ENCODE measurements at regions of chr16 and their contacts with region 1.

Region 1: GRCh38 chr16:66406534-66407221 is 20.4 kb upstream of the BEAN1 start:
- DNase-seq: peak; percentile 96
- H3K4me3 Mint-ChIP-seq: peak overlapping the region; percentile 87
- H3K27ac Mint-ChIP-seq: peak overlapping the region; percentile 63
- H3K4me1 Mint-ChIP-seq: peaks cover 19% of the 10 kb centered on the region
- H3K27me3 Mint-ChIP-seq: peaks cover 19% of the 10 kb centered on the region

Region 2: DNA sequence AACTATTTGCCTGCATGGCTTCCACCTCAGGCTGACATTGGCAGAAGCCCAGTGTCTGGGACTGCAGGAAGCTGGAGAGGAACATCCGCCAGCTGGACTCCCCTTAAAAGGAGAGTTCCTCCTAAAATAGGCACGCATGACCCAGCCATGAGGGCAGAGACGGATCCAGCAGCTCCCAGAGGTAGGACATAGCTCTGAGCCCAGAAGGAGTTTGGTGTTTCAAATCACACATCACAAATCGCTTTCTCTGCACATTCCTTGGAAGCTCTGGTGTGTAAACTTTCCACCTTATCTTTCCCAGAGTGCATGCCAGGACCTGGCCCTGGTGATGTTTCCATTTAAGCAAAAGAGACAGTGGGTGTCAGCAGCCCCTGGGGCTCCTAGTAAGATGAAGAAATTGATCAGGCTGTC is 271.3 kb before region 1 on chr16:
- intact Hi-C with region 1: no loop called
- DNase-seq: no peak
- H3K4me3 Mint-ChIP-seq: no peak overlapping the region
- H3K27ac Mint-ChIP-seq: no peak overlapping the region
- H3K4me1 Mint-ChIP-seq: no peaks in the 10 kb centered on the region
- H3K27me3 Mint-ChIP-seq: peaks cover 2% of the 10 kb centered on the region

Region 3: DNA sequence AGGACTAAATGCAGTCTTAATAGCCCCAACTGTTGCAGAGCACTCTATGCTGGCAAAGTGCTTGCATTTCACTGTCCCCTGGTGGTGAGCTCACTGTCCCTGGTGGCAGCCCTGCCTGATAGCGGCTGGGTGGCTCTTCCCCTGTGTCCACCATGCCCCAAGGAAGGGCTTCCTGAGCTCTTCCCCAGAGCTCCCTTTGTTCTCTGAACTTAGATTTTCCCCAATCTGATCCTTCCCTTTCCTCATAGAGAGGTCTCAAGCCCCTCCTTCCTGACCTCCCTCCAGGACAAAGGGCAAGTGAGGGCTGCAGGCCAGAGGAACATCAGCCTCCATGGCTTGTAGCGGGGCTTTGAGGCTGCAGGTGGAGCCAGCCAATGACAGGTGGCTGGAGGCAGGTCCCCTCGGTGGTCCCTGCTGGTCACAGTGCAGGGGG is 37.4 kb after region 1 on chr16:
- intact Hi-C with region 1: no loop called
- DNase-seq: no peak
- H3K4me3 Mint-ChIP-seq: no peak overlapping the region
- H3K27ac Mint-ChIP-seq: no peak overlapping the region
- H3K4me1 Mint-ChIP-seq: no peaks in the 10 kb centered on the region
- H3K27me3 Mint-ChIP-seq: peaks cover 33% of the 10 kb centered on the region

Region 4: DNA sequence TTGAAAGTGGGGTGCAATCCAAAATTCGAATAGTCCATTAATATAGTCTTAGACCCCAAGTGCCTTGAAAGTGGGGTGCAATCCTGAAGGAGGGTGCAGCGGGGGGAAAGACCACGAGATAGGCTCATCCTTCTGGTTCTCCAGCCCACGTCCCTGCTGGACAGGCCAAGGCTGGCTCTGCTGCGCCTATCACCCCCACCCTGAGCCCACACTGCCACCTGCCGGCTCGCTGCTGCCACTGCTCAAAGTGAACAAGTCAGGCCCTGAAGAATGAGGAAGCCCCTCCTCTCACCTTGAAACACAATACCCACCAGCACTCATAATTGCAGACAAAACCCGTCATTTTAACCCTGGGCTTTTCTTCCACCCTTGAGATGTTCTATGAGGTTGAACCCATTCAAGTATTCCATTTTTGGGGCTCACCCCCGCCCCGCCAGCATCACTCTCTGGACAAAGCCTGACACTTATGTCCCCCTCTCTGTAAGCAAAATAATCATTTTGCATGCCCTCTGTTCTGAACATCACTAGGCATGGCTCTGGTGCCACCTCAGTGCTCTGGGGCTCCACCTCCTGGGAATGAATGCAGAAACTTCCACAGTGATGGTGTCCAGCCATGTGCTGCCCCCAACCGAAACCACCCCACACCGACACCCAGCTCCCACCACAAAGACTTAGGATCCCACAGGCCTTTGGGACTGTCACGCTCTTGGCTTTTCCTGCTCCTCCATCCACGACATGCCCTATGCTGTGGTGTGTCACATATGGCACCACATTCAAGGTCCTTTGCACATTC is 77.2 kb after region 1 on chr16:
- intact Hi-C with region 1: loop called (anchors 1 kb)
- DNase-seq: peak; percentile 93
- H3K4me3 Mint-ChIP-seq: peak overlapping the region; percentile 33
- H3K27ac Mint-ChIP-seq: peak overlapping the region; percentile 31
- H3K4me1 Mint-ChIP-seq: peaks cover 23% of the 10 kb centered on the region
- H3K27me3 Mint-ChIP-seq: no peaks in the 10 kb centered on the region

Region 5: DNA sequence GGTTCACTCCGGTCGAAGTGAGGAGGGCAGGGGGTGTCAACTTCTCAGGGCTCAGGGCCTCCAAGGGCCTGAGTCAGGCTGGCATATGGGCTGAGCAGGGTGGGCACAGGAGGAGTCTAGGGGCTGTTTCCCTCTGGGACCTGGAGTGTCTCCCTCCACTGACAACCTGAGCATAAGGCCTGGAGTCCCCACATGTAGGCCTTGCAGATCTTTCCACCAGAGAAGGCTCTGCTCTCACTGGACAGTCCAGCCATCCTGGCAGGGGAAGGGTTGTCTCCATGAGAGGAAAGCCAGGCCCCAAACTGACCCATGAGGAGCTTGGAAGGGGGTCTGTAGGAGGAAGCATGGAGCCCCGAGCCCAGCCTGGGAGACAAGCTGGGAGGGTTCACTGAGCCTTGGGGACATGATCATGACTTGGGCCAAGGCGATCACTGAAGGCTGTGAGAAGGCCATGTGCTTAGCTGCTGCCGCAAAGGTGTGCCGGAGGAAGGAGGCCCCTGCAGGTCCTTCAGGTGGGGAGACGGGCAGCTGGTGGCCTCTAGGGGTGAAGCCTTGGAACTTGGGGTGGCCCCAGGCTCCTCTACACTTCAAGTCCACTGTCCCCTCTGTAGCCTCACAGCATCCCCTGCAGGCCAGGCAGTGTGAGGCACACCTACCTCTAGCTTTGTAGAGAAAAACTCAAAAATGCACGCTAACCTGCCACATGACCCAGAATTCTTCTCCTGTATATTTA is 182.5 kb after region 1 on chr16:
- intact Hi-C with region 1: loop called (anchors 1 kb)
- DNase-seq: peak; percentile 89
- H3K4me3 Mint-ChIP-seq: peak overlapping the region; percentile 76
- H3K27ac Mint-ChIP-seq: peak overlapping the region; percentile 56
- H3K4me1 Mint-ChIP-seq: peaks cover 34% of the 10 kb centered on the region
- H3K27me3 Mint-ChIP-seq: no peaks in the 10 kb centered on the region

Region 6: GRCh38 chr16:66740010-66740409 is 333.3 kb after region 1 on chr16:
- intact Hi-C with region 1: loop called (anchors 5 kb)
- DNase-seq: peak; percentile 79
- H3K4me3 Mint-ChIP-seq: no peak overlapping the region
- H3K27ac Mint-ChIP-seq: no peak overlapping the region
- H3K4me1 Mint-ChIP-seq: peaks cover 15% of the 10 kb centered on the region
- H3K27me3 Mint-ChIP-seq: no peaks in the 10 kb centered on the region